AG04449 (cell line): ENCODE measurements at regions of chr3 and their contacts with region 1.

Region 1: GRCh38 chr3:157606011-157606851 is 103.0 kb upstream of the VEPH1 start:
- DNase-seq: no peak
- H3K4me3 ChIP-seq: no peak overlapping the region
- CTCF ChIP-seq: peak; percentile 90

Region 2: DNA sequence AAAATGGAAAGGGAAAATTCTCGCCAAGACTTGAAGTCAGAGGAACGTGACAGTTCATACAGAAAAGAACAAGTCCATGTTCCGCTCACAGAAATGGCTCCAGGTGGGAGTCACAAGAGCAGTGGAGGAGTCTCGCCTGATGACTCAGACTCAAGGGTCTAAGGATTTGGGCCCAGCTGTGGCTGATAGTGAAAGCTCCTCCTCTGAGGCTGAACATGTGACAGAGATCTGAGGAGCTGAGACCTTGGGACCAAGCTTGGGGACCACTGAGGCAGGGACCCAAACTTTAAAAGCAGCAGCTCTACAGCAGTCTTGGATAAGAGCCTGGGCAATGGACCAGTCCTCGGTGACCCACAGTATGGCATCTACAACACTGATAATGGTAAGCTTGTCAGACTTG is 93.7 kb before region 1 on chr3:
- CTCF ChIA-PET with region 1: no interaction called
- POLR2A ChIA-PET with region 1: no interaction called
- DNase-seq: no peak
- H3K4me3 ChIP-seq: no peak overlapping the region
- CTCF ChIP-seq: no peak

Region 3: DNA sequence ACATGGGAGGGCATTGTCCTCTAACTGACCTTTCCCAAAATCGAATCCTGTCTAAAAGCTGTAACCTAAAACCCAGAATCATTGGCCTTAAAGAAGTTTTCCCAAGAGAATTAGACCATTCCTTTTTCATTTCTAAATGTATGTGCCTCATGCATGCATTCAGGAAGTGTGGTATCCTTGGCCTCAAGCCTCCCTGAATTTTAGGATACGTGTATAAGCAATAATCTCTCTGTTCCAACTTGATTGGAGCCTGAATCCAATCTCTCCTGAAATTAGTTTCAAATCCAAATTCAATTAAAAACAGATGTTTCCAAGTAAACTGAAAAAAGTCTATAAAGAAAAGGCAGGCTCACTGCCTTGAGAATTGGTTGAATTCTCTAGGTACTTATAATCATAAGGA is 17.0 kb before region 1 on chr3:
- CTCF ChIA-PET with region 1: interaction called, 25 read pairs
- POLR2A ChIA-PET with region 1: no interaction called
- DNase-seq: no peak
- H3K4me3 ChIP-seq: no peak overlapping the region
- CTCF ChIP-seq: no peak

Region 4: DNA sequence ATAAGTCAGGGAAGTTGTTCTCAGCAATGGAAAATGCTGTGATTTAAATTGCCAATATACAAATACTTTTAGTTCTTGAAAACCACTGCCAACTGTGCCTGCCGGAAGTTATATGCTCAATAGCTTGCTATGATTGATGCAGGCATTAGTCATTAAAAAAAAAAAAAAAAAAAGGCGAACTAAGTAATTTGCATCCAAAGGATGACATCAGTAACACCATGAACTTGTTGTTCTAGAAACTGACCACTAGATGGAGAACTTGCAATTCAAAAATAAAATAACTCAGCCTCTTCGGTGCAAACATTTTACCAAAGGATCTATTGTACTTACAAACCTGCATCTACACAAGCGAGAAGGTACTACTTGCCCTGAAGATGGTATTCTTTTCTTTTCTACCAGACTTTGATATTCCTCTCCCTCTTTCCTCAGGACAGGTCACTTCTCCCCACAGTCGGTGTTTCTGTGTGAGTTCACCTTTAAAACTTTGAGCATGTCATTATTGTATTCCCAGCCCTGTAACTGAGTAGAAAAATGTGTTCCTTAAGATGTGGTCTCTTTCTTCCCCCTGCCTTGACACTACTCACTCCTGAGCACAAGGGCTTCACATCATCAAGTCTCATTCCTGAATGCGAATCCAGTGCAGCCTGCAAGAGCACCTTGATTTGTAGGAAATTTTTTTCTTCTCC is 12.0 kb after region 1 on chr3:
- CTCF ChIA-PET with region 1: interaction called, 43 read pairs
- POLR2A ChIA-PET with region 1: no interaction called
- DNase-seq: peak; percentile 46
- H3K4me3 ChIP-seq: no peak overlapping the region
- CTCF ChIP-seq: peak; percentile 18

Region 5: GRCh38 chr3:158109804-158110657 is 503.8 kb after region 1 on chr3 and contains the start of gene RSRC1:
- CTCF ChIA-PET with region 1: interaction called, 13 read pairs
- POLR2A ChIA-PET with region 1: no interaction called
- DNase-seq: peak; percentile 65
- H3K4me3 ChIP-seq: peak within 1 kb of the TSS; percentile 92
- CTCF ChIP-seq: no peak

Region 6: GRCh38 chr3:158532099-158532734 is 926.0 kb after region 1 on chr3:
- CTCF ChIA-PET with region 1: interaction called, 53 read pairs
- POLR2A ChIA-PET with region 1: no interaction called
- DNase-seq: no peak
- H3K4me3 ChIP-seq: no peak overlapping the region
- CTCF ChIP-seq: peak; percentile 55